AG04449 (cell line): ENCODE measurements at regions of chr17 and their contacts with region 1.

Region 1: GRCh38 chr17:21511363-21512198 is 135.4 kb downstream of the KCNJ12 start:
- DNase-seq: no peak
- H3K4me3 ChIP-seq: peak overlapping the region; percentile 58
- CTCF ChIP-seq: peak; percentile 76

Region 2: GRCh38 chr17:21126645-21127510 is 384.7 kb before region 1 on chr17 and contains the start of gene DHRS7B:
- CTCF ChIA-PET with region 1: interaction called, 81 read pairs
- POLR2A ChIA-PET with region 1: no interaction called
- DNase-seq: peak; percentile 26
- H3K4me3 ChIP-seq: peak within 1 kb of the TSS; percentile 98
- CTCF ChIP-seq: no peak

Region 3: DNA sequence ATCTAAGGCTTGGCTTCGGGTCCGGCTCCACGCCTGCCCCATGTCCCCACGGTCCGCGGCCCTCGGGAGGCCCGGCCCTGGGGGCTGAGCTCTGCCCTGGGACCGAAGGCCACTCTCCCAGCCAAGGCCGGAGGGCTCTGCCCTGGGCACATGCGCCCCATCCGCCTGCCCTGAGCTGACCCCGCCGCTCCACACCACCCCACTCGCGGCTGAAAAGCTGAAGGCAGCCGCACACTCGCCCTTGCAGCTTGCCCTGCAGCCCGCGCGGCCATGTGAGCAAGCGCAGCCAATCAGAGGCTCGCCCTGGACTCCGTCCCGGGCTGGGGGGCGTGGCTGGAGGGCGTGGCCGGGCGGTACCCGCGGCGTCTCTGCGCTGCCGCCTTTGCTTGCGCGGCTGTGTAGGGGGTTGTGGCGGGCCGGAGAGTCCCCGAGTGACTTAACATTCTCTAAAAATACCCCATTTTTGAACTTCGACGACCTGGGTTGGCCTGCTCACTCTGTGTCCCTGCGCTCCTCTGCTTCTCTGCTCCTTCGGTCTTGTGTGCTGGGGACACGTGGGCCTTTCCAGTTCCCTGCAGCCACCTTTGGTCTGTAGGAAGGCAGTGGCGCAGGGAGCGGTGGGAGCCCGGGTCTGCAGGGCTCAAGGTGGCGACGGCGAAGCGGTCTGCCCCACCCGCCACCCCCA is 235.9 kb before region 1 on chr17:
- CTCF ChIA-PET with region 1: interaction called, 56 read pairs
- POLR2A ChIA-PET with region 1: no interaction called
- DNase-seq: no peak
- H3K4me3 ChIP-seq: peak overlapping the region; percentile 65
- CTCF ChIP-seq: no peak

Region 4: GRCh38 chr17:21445091-21445650 is 66.4 kb before region 1 on chr17:
- CTCF ChIA-PET with region 1: interaction called, 17 read pairs
- POLR2A ChIA-PET with region 1: no interaction called
- DNase-seq: no peak
- H3K4me3 ChIP-seq: no peak overlapping the region
- CTCF ChIP-seq: no peak

Region 5: GRCh38 chr17:21495281-21495680 is 16.3 kb before region 1 on chr17:
- CTCF ChIA-PET with region 1: interaction called, 42 read pairs
- POLR2A ChIA-PET with region 1: no interaction called
- DNase-seq: no peak
- H3K4me3 ChIP-seq: no peak overlapping the region
- CTCF ChIP-seq: no peak

Region 6: GRCh38 chr17:21532763-21533385 is 21.3 kb after region 1 on chr17:
- CTCF ChIA-PET with region 1: interaction called, 72 read pairs
- POLR2A ChIA-PET with region 1: no interaction called
- DNase-seq: no peak
- H3K4me3 ChIP-seq: no peak overlapping the region
- CTCF ChIP-seq: no peak

Region 7: GRCh38 chr17:22300731-22301352 is 789.3 kb after region 1 on chr17:
- CTCF ChIA-PET with region 1: no interaction called
- POLR2A ChIA-PET with region 1: no interaction called
- DNase-seq: no peak
- H3K4me3 ChIP-seq: no peak overlapping the region
- CTCF ChIP-seq: no peak